A549 (cell line): ENCODE measurements at regions of chr15 and their contacts with region 1.

Region 1: DNA sequence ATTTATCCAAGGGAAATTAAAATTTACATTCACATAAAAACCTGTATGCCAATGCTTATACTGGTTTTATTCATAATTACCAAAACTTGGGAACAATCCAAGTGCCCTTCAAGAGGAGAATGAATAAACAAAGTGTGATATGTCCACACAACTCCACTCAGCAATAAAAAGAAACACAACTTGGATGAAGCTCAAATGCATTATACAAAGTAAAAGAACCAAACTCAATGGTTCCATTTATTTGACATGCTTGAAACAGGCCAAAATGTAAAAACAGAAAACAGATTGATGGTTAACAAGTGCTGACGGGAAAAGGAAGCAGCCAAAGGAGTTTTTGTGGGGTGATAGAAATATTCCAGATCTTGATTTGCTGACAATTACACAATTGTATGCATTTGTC is 23.5 kb downstream of the OCA2 start:
- DNase-seq: no peak
- ATAC-seq: no peak
- H3K4me3 ChIP-seq: no peak overlapping the region
- H3K27ac ChIP-seq: no peak overlapping the region
- H3K4me1 ChIP-seq: no peaks in the 10 kb centered on the region
- CTCF ChIP-seq: no peak
- EP300 ChIP-seq: no peak
- POLR2A ChIP-seq: no peak
- RAD21 ChIP-seq: no peak

Region 2: DNA sequence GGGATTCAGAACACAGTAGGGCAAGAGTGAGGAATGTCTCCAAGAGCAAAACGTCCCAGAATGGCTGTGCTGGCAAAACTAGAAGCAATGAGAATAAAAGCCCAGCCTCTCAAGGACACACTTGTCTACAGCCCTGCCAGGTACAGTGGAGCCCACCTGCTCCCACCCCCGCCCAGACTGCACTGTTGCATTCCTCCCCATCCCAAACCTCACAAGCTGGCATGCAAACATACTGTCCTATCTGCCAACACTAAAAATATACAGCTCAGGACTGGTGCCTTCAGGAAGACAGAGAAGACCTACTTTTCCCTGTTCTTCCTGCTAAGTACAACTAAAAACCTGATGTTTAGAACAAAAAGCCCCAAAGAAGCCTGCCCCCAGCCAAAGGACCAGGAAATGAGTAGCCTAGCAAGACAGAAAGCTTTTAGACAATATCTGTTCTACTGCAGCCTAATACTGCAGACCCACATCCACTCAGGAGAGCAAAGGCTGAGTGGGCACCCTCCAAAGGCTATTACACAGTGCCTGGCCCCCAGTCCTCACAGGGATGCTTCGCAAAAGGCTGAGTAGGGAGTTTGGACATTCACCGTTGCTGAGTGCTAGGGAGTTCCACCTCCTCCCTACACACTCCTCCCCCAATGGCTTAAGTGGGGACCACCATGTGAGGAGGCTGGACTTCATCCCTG is 10.1 kb after region 1 on chr15:
- CTCF ChIA-PET with region 1: interaction called, 11 read pairs
- POLR2A ChIA-PET with region 1: no interaction called
- DNase-seq: no peak
- ATAC-seq: peak in 1 of 2 experiments; percentile 68; a peak in 4 of 6 replicates
- H3K4me3 ChIP-seq: no peak overlapping the region
- H3K27ac ChIP-seq: no peak overlapping the region
- H3K4me1 ChIP-seq: no peaks in the 10 kb centered on the region
- CTCF ChIP-seq: no peak
- EP300 ChIP-seq: no peak
- POLR2A ChIP-seq: no peak
- RAD21 ChIP-seq: no peak

Region 3: GRCh38 chr15:28110481-28110881 is 34.9 kb after region 1 on chr15:
- CTCF ChIA-PET with region 1: no interaction called
- POLR2A ChIA-PET with region 1: no interaction called
- DNase-seq: no peak
- ATAC-seq: no peak
- H3K4me3 ChIP-seq: no peak overlapping the region
- H3K27ac ChIP-seq: no peak overlapping the region
- H3K4me1 ChIP-seq: no peaks in the 10 kb centered on the region; the same call in 2 of the 3 replicates
- CTCF ChIP-seq: no peak
- EP300 ChIP-seq: no peak
- POLR2A ChIP-seq: no peak
- RAD21 ChIP-seq: no peak